Endothelial cell of umbilical vein (primary cell): ENCODE measurements at regions of chr9 and their contacts with region 1.

Region 1: DNA sequence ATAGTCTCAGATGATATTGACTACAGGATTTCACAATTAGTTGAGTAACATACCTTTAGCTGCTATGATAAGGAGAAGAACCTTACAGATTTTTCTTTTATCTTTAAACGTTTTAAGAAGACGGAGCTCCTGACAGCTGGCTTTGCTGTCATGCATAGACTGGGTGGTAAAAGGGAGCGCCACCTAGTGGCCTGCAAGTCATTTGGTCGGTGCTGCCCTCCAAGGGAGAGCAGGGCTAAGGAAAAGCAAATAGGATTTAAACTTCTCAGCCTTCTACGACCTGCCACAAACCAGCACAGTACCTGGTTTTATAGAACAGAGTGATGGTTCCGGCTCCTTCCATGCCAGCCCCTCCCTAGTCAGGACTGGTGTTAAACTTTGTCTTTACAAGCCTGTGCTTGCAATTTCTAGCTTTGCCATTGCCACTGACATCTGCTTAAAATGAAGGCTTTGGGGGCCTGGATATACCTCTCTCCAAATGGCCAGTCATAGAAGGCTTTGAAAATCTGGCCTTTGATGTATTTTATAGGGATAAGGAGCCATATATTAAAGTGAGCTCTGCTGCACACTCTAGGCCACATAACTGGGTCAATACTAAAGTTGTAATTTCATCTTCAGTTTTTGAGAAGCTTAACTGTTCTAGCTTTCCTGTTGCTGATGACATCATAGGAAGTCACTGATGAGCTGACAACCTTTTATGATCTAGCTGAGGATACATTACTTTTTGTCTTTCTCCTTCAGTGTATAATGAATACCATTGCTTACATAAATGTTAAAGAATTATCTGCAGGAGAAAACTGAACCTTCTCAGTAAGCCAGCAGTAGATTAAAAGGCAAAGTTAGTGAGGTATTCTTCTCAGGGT is 31.1 kb upstream of the ADAMTSL1 start:
- DNase-seq: peak; percentile 87
- H3K4me3 ChIP-seq: no peak overlapping the region
- H3K27ac ChIP-seq: no peak overlapping the region
- H3K4me1 ChIP-seq: peaks cover 24% of the 10 kb centered on the region
- H3K27me3 ChIP-seq: no peaks in the 10 kb centered on the region
- CTCF ChIP-seq: peak; percentile 87 to 97
- POLR2A ChIP-seq: no peak

Region 2: DNA sequence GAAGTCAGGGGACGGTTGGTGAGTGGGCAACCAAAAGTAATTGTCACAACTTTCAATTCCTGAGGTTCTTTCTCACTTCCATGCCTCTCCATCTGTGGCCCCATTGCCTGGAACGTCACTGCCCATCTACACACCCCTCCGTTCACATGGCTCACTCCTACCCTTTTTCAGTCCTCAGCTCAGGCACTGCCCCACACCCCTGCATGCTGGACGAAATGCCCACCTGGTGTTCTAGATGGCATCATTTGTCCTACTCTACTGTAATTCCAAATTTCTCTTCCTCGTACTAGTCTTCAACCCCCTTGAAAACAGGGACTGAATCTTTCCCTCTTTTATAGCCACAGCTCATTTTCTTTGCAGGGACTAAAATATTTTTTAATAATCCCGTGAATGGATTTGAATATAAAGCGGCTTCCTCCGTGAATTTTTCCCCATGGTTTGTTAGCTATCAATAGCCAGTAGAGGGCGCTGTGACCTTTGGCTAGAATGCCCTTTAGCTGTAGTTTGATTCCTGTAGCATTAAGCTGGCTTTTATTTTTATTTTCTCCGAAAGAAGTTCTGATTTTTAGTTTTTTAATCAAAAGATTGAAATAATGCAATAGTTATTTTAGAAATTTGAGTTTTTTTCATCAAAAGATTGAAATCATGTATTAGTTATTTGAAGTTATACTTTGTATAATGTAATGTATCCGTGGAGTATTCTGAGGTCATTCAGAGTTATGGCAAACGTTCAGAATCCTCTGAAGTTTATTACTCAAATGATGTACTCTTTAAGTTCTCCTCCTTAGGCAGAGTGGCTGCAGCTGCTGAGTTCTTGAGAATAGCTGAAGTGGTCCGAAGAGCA is 631.9 kb before region 1 on chr9:
- CTCF ChIA-PET with region 1: interaction called, 8 read pairs
- POLR2A ChIA-PET with region 1: no interaction called
- dilution Hi-C with region 1: no loop called
- intact Hi-C with region 1: loop called (anchors 5 kb)
- DNase-seq: peak; percentile 59
- H3K4me3 ChIP-seq: no peak overlapping the region
- H3K27ac ChIP-seq: no peak overlapping the region
- H3K4me1 ChIP-seq: no peaks in the 10 kb centered on the region
- H3K27me3 ChIP-seq: peaks cover 8 to 9% of the 10 kb centered on the region in 2 experiments
- CTCF ChIP-seq: peak; percentile 63 to 69
- POLR2A ChIP-seq: no peak

Region 3: DNA sequence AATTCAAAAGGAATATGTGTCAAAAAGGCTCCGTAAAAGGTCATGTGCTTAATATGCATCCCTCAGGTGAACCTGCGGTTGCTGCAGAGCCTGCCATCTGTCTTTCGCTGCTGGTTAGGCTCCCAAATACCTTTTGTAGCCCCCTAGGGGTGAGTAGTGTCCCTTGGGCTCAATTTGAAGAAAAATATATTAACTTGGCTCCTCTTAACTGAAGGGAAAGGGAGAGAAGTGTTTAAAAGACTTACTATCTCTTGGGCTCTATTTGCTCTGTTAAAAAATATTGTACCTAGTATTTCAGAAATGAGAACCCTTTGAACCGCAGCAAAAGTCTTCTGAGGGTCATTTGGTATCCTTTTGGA is 145.3 kb before region 1 on chr9:
- CTCF ChIA-PET with region 1: interaction called, 4 read pairs
- POLR2A ChIA-PET with region 1: no interaction called
- dilution Hi-C with region 1: no loop called
- intact Hi-C with region 1: loop called (anchors 1 kb)
- DNase-seq: no peak
- H3K4me3 ChIP-seq: no peak overlapping the region
- H3K27ac ChIP-seq: peak overlapping the region; percentile 64
- H3K4me1 ChIP-seq: peaks cover 15% of the 10 kb centered on the region
- H3K27me3 ChIP-seq: no peaks in the 10 kb centered on the region
- CTCF ChIP-seq: peak; percentile 32 to 52
- POLR2A ChIP-seq: no peak

Region 4: DNA sequence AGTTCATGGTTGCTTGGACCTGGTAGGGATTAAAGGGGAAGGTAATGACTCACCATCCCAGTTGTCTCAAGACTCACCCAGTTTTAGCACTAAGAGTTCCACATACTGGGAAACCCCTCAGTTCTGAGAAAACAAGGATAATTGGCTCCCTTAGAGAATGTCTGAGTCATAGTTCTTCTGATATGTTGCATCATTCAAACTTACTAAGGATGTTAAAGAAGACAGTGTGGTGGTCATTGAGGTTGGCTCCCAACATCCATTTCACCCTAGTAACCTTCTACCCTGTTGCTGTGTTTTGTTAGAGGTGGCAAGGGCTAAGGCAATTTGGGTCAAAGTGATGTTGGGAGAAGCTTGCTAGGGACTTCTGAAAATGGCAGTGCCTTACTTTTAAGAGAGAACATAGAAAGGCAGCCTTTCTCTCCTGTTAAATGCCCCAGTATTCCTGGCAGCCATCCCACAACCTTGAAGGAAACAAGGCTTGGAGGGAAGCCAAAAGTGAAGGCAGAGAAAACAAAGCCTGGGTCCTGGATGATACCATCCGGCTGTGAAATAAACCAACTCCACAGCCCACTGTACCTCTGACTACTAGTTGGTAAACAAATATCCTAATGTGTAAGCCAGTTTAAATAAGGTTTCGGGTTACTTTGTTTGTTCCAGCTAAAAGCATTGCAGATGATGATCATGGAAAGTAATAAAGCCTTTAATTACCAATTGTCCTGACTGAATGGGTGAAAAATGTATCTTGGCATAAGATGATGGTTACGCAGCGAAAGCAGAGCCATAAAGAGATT is 49.3 kb before region 1 on chr9:
- CTCF ChIA-PET with region 1: interaction called, 10 read pairs
- POLR2A ChIA-PET with region 1: no interaction called
- dilution Hi-C with region 1: no loop called
- intact Hi-C with region 1: loop called (anchors 1 kb)
- DNase-seq: peak; percentile 98
- H3K4me3 ChIP-seq: no peak overlapping the region
- H3K27ac ChIP-seq: peak overlapping the region; percentile 98
- H3K4me1 ChIP-seq: peaks cover 44% of the 10 kb centered on the region
- H3K27me3 ChIP-seq: no peaks in the 10 kb centered on the region
- CTCF ChIP-seq: no peak
- POLR2A ChIP-seq: no peak

Region 5: DNA sequence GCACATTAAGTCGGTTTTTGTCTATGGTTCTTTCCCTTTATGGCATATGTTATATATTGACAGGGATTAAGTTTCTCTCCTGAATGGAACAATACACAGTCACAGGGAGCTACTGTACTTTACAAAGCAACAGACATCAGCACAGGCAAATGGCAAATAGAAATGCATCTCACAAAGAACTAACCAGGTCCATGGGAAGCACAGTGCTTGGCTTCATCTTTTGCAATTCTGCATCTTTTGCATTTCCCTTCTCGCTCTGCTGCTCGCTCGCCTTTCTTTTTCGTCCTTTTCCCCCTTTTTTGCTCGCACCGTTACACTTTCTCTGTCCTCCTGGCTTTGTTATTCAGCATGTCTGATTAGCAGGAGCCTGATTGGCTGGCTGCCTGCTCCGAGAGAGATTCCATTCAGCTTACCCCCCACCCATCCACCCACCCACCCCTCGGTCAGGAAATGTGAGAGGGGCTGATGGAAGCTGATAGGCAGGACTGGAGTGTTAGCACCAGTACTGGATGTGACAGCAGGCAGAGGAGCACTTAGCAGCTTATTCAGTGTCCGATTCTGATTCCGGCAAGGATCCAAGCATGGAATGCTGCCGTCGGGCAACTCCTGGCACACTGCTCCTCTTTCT is 30.9 kb after region 1 on chr9 and contains the start of gene ADAMTSL1:
- CTCF ChIA-PET with region 1: interaction called, 62 read pairs
- POLR2A ChIA-PET with region 1: interaction called, 12 read pairs
- dilution Hi-C with region 1: no loop called
- intact Hi-C with region 1: loop called (anchors 1 kb)
- DNase-seq: peak; percentile 93
- H3K4me3 ChIP-seq: peak within 1 kb of the TSS; percentile 35 to 51 (median 38)
- H3K27ac ChIP-seq: peak within 1 kb of the TSS; percentile 48
- H3K4me1 ChIP-seq: peaks cover 37% of the 10 kb centered on the region
- H3K27me3 ChIP-seq: no peaks in the 10 kb centered on the region
- CTCF ChIP-seq: no peak
- POLR2A ChIP-seq: peak; percentile 33
- total RNA-seq, gene ADAMTSL1: 16.9 and 18.4 TPM in 2 replicates

Region 6: GRCh38 chr9:18520416-18521047 is 77.7 kb after region 1 on chr9:
- CTCF ChIA-PET with region 1: no interaction called
- POLR2A ChIA-PET with region 1: no interaction called
- dilution Hi-C with region 1: no loop called
- intact Hi-C with region 1: no loop called
- DNase-seq: no peak
- H3K4me3 ChIP-seq: no peak overlapping the region
- H3K27ac ChIP-seq: no peak overlapping the region
- H3K4me1 ChIP-seq: no peaks in the 10 kb centered on the region
- H3K27me3 ChIP-seq: no peaks in the 10 kb centered on the region
- CTCF ChIP-seq: no peak
- POLR2A ChIP-seq: no peak

Region 7: DNA sequence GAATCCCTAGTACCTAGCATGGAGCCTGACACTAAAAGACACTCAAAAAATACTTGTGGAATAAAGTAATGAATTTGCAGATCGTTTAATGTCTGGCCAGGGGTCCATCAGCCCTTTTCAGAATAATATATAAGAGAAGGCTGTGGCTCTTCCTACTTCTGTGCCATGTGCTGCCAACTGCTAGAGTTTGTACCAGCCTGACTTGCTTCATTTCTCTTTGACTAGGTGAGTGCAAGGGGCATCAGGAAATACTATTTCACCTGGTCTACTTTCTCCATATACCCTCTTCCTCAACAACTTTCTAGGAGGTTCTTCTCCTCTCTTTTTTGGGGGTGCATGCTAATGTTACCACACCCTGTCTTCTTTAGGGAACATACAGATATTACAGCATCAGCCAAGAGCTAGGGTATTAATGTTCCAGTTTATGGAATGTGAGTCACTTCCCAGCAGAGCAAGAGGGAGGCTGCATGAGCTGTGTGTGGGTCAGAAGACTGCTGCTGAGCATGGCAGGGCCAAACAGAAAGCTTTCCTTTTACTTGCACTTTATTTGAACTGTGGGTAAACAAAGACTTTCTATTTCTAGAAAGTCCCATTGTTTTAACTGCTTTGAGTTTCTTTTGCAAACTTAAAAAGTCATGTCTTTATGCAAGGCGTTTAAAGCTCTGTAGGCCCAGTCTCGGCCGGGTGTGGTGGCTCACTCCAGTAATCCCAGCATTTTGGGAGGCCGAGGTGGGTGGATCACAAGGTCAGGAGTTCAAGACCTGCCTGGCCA is 190.0 kb after region 1 on chr9:
- CTCF ChIA-PET with region 1: interaction called, 3 read pairs
- POLR2A ChIA-PET with region 1: no interaction called
- dilution Hi-C with region 1: no loop called
- intact Hi-C with region 1: loop called (anchors 2 kb)
- DNase-seq: peak; percentile 96
- H3K4me3 ChIP-seq: no peak overlapping the region
- H3K27ac ChIP-seq: peak overlapping the region; percentile 81
- H3K4me1 ChIP-seq: peaks cover 39% of the 10 kb centered on the region
- H3K27me3 ChIP-seq: no peaks in the 10 kb centered on the region
- CTCF ChIP-seq: no peak
- POLR2A ChIP-seq: no peak

Region 8: GRCh38 chr9:18721267-18721994 is 278.6 kb after region 1 on chr9:
- CTCF ChIA-PET with region 1: no interaction called
- POLR2A ChIA-PET with region 1: no interaction called
- dilution Hi-C with region 1: no loop called
- intact Hi-C with region 1: no loop called
- DNase-seq: no peak
- H3K4me3 ChIP-seq: no peak overlapping the region
- H3K27ac ChIP-seq: no peak overlapping the region
- H3K4me1 ChIP-seq: no peaks in the 10 kb centered on the region
- H3K27me3 ChIP-seq: no peaks in the 10 kb centered on the region
- CTCF ChIP-seq: no peak
- POLR2A ChIP-seq: no peak

Region 9: DNA sequence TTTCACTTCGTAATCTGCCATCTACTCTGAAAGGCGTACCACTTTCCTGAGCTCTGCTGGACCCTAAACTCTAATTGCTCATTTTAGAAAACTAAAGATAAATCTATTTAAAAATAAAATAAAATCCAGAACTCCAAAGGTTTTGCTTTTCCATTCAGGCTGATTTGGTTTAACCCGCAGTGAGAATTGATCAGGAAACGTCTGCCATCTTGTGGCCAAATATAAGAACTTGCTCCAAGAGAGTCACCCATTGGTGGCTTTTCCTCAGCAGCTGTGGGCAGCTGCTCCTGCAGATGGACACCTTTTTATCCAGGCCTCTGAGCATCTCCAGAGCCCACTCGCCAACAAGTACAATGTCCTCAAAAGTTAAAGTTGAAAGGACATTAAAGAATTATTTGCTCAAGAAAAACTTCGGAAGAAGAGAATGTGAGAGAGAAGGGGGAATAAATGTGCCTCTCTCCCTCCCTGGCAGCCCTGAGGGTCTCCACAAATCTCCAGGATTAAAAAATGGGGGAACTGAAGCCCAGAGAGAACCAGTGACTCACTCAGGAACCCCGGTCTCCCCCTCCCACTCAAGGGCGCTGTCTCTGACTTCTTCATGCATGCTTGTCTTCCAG is 586.1 kb after region 1 on chr9:
- CTCF ChIA-PET with region 1: interaction called, 13 read pairs
- POLR2A ChIA-PET with region 1: no interaction called
- dilution Hi-C with region 1: no loop called
- intact Hi-C with region 1: loop called (anchors 1 kb)
- DNase-seq: peak; percentile 59
- H3K4me3 ChIP-seq: no peak overlapping the region
- H3K27ac ChIP-seq: no peak overlapping the region
- H3K4me1 ChIP-seq: no peaks in the 10 kb centered on the region
- H3K27me3 ChIP-seq: no peaks in the 10 kb centered on the region
- CTCF ChIP-seq: peak; percentile 58 to 66
- POLR2A ChIP-seq: no peak

Region 10: GRCh38 chr9:19154135-19154612 is 711.3 kb after region 1 on chr9:
- CTCF ChIA-PET with region 1: no interaction called
- POLR2A ChIA-PET with region 1: no interaction called
- dilution Hi-C with region 1: no loop called
- intact Hi-C with region 1: no loop called
- DNase-seq: no peak
- H3K4me3 ChIP-seq: no peak overlapping the region
- H3K27ac ChIP-seq: no peak overlapping the region
- H3K4me1 ChIP-seq: no peaks in the 10 kb centered on the region
- H3K27me3 ChIP-seq: no peaks in the 10 kb centered on the region
- CTCF ChIP-seq: no peak
- POLR2A ChIP-seq: no peak